Uterus (tissue), 4 donors: ENCODE measurements at regions of chr16 and their contacts with region 1.

Region 1: GRCh38 chr16:69796351-69797118 is 34.4 kb downstream of the WWP2 start:
- DNase-seq: peak; percentile 25 to 38
- H3K4me3 ChIP-seq: no peak overlapping the region
- H3K27ac ChIP-seq: no peak overlapping the region
- H3K4me1 ChIP-seq: no peaks in the 10 kb centered on the region
- H3K27me3 ChIP-seq: no peaks in the 10 kb centered on the region
- CTCF ChIP-seq: peak; percentile 88 to 95 (median 92)
- POLR2A ChIP-seq: no peak

Region 2: GRCh38 chr16:69848637-69849545 is 52.4 kb after region 1 on chr16:
- intact Hi-C with region 1: no loop called
- DNase-seq: peak; percentile 82 to 87
- H3K4me3 ChIP-seq: no peak overlapping the region
- H3K27ac ChIP-seq: peak overlapping the region; percentile 71 to 83
- H3K4me1 ChIP-seq: no peaks in the 10 kb centered on the region
- H3K27me3 ChIP-seq: no peaks in the 10 kb centered on the region
- CTCF ChIP-seq: no peak
- POLR2A ChIP-seq: no peak

Region 3: DNA sequence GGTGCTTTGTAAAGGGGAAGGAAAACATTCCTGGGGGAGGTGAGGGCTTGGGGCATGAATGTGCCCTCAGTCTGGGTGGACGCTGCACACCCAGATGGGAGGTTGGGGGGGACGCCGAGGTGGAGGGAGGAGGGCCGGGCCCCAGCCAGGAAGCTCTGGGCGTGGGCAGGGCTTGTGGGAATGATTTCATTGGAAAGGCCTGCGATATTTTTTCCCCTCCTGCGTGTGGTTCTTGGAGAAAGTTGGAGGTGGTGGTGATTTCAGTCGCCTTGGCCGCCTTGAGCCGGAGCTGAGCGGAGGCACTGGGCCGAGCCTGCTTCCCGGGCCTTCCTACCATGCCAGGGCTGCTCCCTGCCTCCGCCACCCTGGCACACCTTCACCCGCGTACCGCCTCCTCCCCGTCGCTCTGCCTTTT is 128.2 kb after region 1 on chr16:
- intact Hi-C with region 1: loop called (anchors 5 kb)
- DNase-seq: peak; percentile 83 to 85
- H3K4me3 ChIP-seq: peak overlapping the region; percentile 30 to 49
- H3K27ac ChIP-seq: peak overlapping the region; percentile 92 to 99
- H3K4me1 ChIP-seq: peaks cover 0 to 17% of the 10 kb centered on the region in 2 donors
- H3K27me3 ChIP-seq: no peaks in the 10 kb centered on the region
- CTCF ChIP-seq: no peak
- POLR2A ChIP-seq: peak; percentile 61 to 68